Calu3 (cell line): ENCODE measurements at regions of chr3 and their contacts with region 1.

Region 1: GRCh38 chr3:46935168-46935858 is 41.2 kb downstream of the CCDC12 start:
- DNase-seq: peak; percentile 88
- H3K4me3 Mint-ChIP-seq: no peak overlapping the region
- H3K27ac Mint-ChIP-seq: peak overlapping the region; percentile 64
- H3K4me1 Mint-ChIP-seq: peaks cover 61% of the 10 kb centered on the region
- H3K27me3 Mint-ChIP-seq: no peaks in the 10 kb centered on the region
- CTCF ChIP-seq: peak; percentile 53

Region 2: GRCh38 chr3:46981932-46982471 is 46.7 kb after region 1 on chr3:
- CTCF ChIA-PET with region 1: interaction called, 12 read pairs
- intact Hi-C with region 1: loop called (anchors 5 kb)
- DNase-seq: peak; percentile 73
- H3K4me3 Mint-ChIP-seq: peak overlapping the region; percentile 81
- H3K27ac Mint-ChIP-seq: peak overlapping the region; percentile 77
- H3K4me1 Mint-ChIP-seq: peaks cover 31% of the 10 kb centered on the region
- H3K27me3 Mint-ChIP-seq: no peaks in the 10 kb centered on the region
- CTCF ChIP-seq: no peak